Activated B cell treated with CpG ODN at 0.5 μM for 24 hours (primary cell): ENCODE measurements at regions of chr6 and their contacts with region 1.

Region 1: GRCh38 chr6:490251-491037 is 98.9 kb downstream of the IRF4 start:
- DNase-seq: no peak
- ATAC-seq: peak; percentile 35
- H3K4me3 Mint-ChIP-seq: peak overlapping the region; percentile 65
- H3K27ac Mint-ChIP-seq: peak overlapping the region; percentile 92
- H3K4me1 Mint-ChIP-seq: peaks cover 64% of the 10 kb centered on the region
- H3K27me3 Mint-ChIP-seq: no peaks in the 10 kb centered on the region
- CTCF ChIP-seq: no peak

Region 2: GRCh38 chr6:431986-432385 is 58.5 kb before region 1 on chr6:
- CTCF ChIA-PET with region 1: no interaction called
- POLR2A ChIA-PET with region 1: interaction called, 4 read pairs
- intact Hi-C with region 1: loop called (anchors 2 kb)
- DNase-seq: no peak
- ATAC-seq: no peak
- H3K4me3 Mint-ChIP-seq: no peak overlapping the region
- H3K27ac Mint-ChIP-seq: peak overlapping the region; percentile 35
- H3K4me1 Mint-ChIP-seq: peaks cover 35% of the 10 kb centered on the region
- H3K27me3 Mint-ChIP-seq: no peaks in the 10 kb centered on the region
- CTCF ChIP-seq: no peak